PC-9 (cell line): ENCODE measurements at regions of chr2 and their contacts with region 1.

Region 1: GRCh38 chr2:27409321-27410073 is at the start of gene PPM1G:
- DNase-seq: peak; percentile 86 to 97
- H3K4me3 ChIP-seq: peak within 1 kb of the TSS; percentile 97
- H3K27ac ChIP-seq: peak within 1 kb of the TSS; percentile 80
- H3K4me1 ChIP-seq: peaks cover 28% of the 10 kb centered on the region
- H3K27me3 ChIP-seq: no peaks in the 10 kb centered on the region
- CTCF ChIP-seq: no peak
- total RNA-seq, gene PPM1G: 114 and 136 TPM in 2 replicates

Region 2: DNA sequence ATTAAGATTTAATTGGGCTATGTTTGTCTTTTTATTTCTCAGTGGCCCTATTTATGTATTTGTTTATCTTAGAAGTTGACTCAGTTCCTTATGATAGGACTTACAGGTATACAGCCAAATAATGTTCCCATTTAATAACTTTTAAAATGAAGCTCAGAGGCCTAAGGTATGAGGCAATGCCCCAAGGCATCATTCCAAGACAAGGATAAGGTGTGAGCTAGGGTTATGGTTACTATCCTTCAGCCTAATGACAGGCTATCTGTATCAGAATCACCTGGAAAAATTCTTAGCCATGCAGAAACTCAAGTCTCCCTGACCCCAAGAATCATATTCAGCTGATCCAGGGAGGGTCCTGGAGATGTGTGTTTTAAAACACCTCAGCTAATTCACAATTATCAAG is 11.5 kb after region 1 on chr2:
- CTCF ChIA-PET with region 1: no interaction called
- POLR2A ChIA-PET with region 1: interaction called, 13 read pairs
- intact Hi-C with region 1: no loop called
- DNase-seq: peak in 1 of 2 experiments; percentile 68
- H3K4me3 ChIP-seq: no peak overlapping the region
- H3K27ac ChIP-seq: peak overlapping the region; percentile 18; the same call in 1 of the 2 replicates
- H3K4me1 ChIP-seq: peaks cover 15% of the 10 kb centered on the region
- H3K27me3 ChIP-seq: no peaks in the 10 kb centered on the region
- CTCF ChIP-seq: no peak

Region 3: GRCh38 chr2:27441958-27442919 is 32.7 kb after region 1 on chr2 and contains the start of gene KRTCAP3:
- CTCF ChIA-PET with region 1: no interaction called
- POLR2A ChIA-PET with region 1: interaction called, 3 read pairs
- intact Hi-C with region 1: loop called (anchors 1 kb)
- DNase-seq: peak; percentile 69 to 86
- H3K4me3 ChIP-seq: peak within 1 kb of the TSS; percentile 79
- H3K27ac ChIP-seq: peak within 1 kb of the TSS; percentile 63
- H3K4me1 ChIP-seq: peaks cover 19% of the 10 kb centered on the region
- H3K27me3 ChIP-seq: no peaks in the 10 kb centered on the region
- CTCF ChIP-seq: peak; percentile 68
- total RNA-seq, gene KRTCAP3: 62.9 and 91.7 TPM in 2 replicates

Region 4: GRCh38 chr2:27663463-27664249 is 254.2 kb after region 1 on chr2 and contains the starts of genes SLC4A1AP and SUPT7L:
- CTCF ChIA-PET with region 1: no interaction called
- POLR2A ChIA-PET with region 1: no interaction called
- intact Hi-C with region 1: loop called (anchors 1 kb)
- DNase-seq: peak; percentile 69 to 71
- H3K4me3 ChIP-seq: peak within 1 kb of the TSS; percentile 86
- H3K27ac ChIP-seq: peak within 1 kb of the TSS; percentile 83
- H3K4me1 ChIP-seq: peaks cover 26% of the 10 kb centered on the region
- H3K27me3 ChIP-seq: no peaks in the 10 kb centered on the region
- CTCF ChIP-seq: peak; percentile 18; the same call in 1 of the 2 replicates
- total RNA-seq, gene SLC4A1AP: 18.5 and 22.7 TPM in 2 replicates
- total RNA-seq, gene SUPT7L: 29.3 and 33.0 TPM in 2 replicates